Right ventricle myocardium inferior (tissue), 1 donor: ENCODE measurements at regions of chr1 and their contacts with region 1.

Region 1: DNA sequence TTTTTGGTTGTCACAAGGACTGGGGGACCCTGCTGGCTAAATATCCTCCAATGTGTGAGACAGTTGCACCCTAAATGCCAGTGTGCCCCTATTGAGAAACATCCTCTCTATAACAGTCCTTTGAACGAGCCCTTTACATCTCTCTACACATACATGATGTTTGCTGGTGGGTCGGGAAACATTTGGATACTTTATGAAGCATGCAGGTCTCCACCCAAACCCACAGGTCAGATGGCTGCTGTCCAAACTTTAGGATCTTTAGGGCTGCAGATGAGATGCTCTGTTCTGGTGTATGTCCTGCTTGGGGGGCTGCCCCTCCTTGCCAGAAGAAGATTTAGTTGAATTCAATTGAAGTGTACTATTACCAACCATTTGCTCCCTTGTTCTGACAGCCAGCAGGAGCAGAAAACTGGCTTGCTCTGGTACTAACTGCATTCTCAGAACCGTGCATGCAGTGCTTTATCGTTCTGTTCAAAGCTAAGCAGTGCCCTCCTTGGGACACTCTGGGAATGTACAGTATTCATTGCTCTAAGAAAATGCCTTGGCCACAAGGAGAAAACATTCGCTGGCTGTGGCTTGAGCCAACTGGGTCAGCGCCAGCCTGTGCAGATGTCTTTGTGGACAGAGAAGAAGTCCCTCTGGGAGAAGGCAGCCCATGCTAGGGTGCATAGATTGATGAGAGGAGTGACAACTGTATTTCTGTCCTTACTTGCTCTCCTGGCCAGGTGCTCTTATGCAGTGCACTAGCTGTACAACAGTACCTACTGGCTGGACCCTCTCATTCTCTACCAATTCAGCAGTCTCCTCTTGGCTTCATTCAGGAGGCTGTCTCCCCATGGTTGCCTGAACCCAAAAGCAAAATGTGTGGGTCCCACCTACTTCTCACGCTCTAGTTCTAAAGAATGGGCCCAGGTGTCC is 61.4 kb upstream of the DIRAS3 start:
- DNase-seq: peak; percentile 79
- ATAC-seq: peak; percentile 84

Region 2: GRCh38 chr1:68010090-68010489 is 101.7 kb before region 1 on chr1:
- intact Hi-C with region 1: loop called (anchors 5 kb)
- DNase-seq: no peak
- ATAC-seq: no peak

Region 3: DNA sequence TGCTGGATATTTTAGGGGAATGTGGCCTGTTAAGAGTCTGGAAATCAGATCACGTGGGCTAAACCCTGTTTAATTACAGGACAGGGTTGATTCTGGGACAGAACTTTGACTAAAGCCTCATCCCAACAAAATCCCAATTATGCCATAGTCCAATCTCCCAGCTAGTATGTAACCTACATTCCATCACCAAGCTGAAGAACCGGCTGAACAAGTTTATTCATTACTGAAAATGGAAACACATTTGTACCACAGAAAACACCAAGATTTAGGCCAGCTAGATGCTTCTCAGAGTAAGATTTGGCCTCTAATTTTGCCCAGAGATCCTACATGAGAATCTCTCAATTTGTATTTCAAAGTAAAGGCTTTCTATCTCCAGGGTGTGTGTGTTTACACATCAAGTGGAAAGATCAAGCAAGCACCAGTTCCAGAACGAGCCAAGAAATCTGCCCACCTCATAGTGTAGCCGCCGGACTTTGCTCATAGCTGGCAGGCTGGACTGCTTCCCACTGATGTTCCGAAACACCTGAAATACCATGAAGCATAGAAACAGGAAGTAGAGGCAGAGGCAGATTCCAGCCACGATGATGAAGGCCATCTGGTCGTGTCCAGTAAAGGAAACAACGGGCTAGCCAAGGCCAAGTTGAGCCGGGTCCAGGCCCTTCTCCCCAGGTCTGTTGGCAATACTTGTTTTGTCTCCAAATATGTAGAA is 33.8 kb after region 1 on chr1:
- intact Hi-C with region 1: no loop called
- DNase-seq: no peak
- ATAC-seq: no peak